Ascending aorta (tissue), 2 donors: ENCODE measurements at regions of chr12 and their contacts with region 1.

Region 1: DNA sequence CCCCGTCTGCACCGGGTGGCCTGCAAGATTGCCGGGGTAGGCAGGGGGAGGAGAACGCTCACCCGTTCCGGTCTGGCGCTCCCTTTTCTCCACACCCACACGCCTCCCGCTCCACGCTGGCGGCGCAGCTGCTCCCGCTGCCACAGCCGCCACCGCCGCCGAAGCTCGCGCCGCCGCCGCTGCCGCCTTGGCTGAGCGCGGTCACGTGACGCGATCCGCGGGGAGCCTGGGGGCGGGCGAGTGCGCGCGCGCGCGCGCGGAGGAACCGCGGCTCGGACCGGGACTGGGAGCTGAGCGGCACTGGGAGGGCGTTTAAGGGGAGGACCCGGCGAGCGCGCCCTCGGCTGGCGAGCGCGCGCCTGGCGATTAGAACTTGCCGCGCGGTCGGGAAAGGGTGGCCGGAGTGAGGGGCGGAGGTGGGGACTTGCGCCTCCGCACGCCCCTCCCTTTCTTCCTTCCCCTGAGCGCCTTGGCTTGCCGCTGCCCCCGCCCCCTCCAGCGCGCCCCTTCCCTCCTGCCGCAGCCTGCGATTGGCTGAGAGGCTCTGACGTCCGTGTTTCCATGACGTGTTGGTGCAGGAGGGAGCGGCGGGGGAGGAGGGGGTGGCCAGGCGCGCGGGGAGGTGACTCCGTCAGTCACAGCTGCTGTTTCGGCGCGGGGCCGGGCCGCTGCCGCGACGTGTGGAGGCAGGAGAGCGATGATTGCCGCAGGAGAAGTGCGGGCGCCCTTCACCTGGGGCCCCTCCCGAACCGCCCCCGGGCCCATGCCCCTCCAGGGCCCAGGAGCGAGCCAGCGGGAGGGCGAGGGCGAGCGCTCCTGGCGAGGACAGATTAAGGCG is 738 bp upstream of the ATP2B1 start:
- DNase-seq: peak; percentile 91 to 99
- H3K4me3 ChIP-seq: peak overlapping the region; percentile 81 to 91
- H3K27ac ChIP-seq: peak overlapping the region; percentile 98
- H3K4me1 ChIP-seq: peaks cover 0 to 5% of the 10 kb centered on the region in 2 donors
- H3K27me3 ChIP-seq: no peaks in the 10 kb centered on the region
- CTCF ChIP-seq: peak in 1 of 3 experiments; percentile 12

Region 2: DNA sequence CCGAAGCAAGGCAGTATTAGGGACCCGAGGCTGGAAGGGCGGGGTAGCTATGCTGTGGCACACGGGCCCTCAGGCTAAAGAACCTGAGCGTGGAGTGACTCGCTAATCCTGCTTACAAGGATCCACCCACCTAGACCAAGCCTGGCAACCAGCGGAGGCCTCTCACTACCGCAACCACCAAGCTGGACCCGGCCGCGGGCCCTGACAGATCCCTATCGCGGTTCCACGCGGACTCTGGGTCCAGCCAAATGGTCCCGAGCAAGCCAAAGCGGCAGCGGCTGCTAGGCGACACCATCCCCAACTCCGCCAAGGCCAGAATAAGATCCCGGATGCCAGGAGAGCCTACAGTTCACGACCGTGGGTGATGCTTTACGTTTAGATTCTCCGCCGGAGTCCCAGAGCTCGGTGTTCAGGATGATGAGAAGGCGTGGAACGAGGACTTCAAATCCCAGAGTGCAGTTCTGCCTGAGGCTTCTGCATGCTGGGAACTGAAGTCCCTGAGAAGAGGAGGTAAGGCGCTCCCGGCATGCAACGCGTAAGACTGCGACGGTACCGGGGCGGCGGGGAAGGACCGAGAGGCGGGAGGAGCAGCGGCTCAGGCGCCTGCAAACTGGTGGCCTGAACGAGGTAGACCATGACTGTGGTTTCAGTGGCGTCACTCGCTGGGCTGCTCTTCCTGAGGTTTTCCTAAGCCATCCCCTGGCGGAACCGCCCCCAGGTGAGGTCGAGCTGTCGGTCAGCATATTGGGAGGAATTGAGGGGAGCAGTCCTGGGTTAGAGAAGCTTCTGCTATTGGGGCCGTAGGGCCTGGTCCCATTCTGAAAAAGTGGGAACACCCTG is 1567.4 kb before region 1 on chr12 and contains the starts of genes CEP290 and TMTC3:
- intact Hi-C with region 1: loop called (anchors 5 kb)
- DNase-seq: peak; percentile 97 to 99
- H3K4me3 ChIP-seq: peak within 1 kb of the TSS; percentile 77 to 83
- H3K27ac ChIP-seq: peak within 1 kb of the TSS; percentile 64 to 78
- H3K4me1 ChIP-seq: peaks cover 0 to 6% of the 10 kb centered on the region in 2 donors
- H3K27me3 ChIP-seq: no peaks in the 10 kb centered on the region
- CTCF ChIP-seq: no peak
- total RNA-seq, gene CEP290: 7.2 TPM
- total RNA-seq, gene TMTC3: 14.5 TPM

Region 3: GRCh38 chr12:89156862-89157262 is 552.5 kb before region 1 on chr12:
- intact Hi-C with region 1: loop called (anchors 5 kb)
- DNase-seq: no peak
- H3K4me3 ChIP-seq: no peak overlapping the region
- H3K27ac ChIP-seq: no peak overlapping the region
- H3K4me1 ChIP-seq: peaks cover 0 to 10% of the 10 kb centered on the region in 2 donors
- H3K27me3 ChIP-seq: no peaks in the 10 kb centered on the region
- CTCF ChIP-seq: no peak

Region 4: DNA sequence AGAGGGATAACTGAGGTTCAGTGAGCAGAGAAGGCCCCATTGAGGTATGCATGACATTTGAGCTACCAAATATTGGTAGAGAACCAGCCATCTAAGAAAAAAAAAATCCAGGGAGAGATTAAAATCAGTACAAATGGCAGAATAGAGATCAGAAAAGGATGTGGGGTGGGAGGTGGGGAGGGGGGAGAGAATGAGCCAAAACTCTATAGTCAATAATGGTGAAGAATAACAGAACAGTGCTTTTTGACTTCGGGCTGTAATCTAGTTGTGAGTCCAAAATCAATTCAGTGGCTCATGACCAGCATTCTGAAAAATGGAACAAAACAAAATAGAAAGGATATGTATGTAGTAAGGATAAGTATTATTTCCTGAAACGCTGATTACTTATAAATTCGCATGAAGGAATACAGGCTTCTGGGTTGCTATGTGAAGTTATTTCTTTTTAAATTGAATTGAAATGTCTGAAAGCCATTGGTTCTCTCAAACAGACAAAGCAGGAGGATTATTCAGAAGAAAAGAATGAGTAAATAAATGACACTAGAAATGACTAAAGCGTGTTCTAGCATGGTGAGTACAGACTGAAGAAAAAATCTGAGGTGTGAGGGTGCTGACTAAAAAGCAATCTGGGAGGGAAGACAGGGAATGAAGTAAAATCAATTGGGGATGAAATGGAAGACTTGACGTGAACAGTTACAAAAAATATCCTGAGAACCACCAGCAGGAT is 73.2 kb before region 1 on chr12:
- intact Hi-C with region 1: loop called (anchors 5 kb)
- DNase-seq: no peak
- H3K4me3 ChIP-seq: no peak overlapping the region
- H3K27ac ChIP-seq: no peak overlapping the region
- H3K4me1 ChIP-seq: no peaks in the 10 kb centered on the region
- H3K27me3 ChIP-seq: no peaks in the 10 kb centered on the region
- CTCF ChIP-seq: no peak

Region 5: GRCh38 chr12:89775063-89775985 is 65.9 kb after region 1 on chr12:
- intact Hi-C with region 1: no loop called
- DNase-seq: no peak
- H3K4me3 ChIP-seq: no peak overlapping the region
- H3K27ac ChIP-seq: no peak overlapping the region
- H3K4me1 ChIP-seq: no peaks in the 10 kb centered on the region
- H3K27me3 ChIP-seq: no peaks in the 10 kb centered on the region
- CTCF ChIP-seq: no peak

Region 6: GRCh38 chr12:89949457-89950195 is 240.2 kb after region 1 on chr12:
- intact Hi-C with region 1: loop called (anchors 2 kb)
- DNase-seq: peak in 1 of 2 donors; percentile 67
- H3K4me3 ChIP-seq: no peak overlapping the region
- H3K27ac ChIP-seq: no peak overlapping the region
- H3K4me1 ChIP-seq: peaks cover 0 to 19% of the 10 kb centered on the region in 2 donors
- H3K27me3 ChIP-seq: no peaks in the 10 kb centered on the region
- CTCF ChIP-seq: peak in 1 of 3 experiments; percentile 8